ENCODE measurements at regions of chr16 and their contacts with region 1.

Region 1: GRCh38 chr16:87744750-87745514 is 20.9 kb downstream of the KLHDC4 start:
- DNase-seq: no peak

Region 2: DNA sequence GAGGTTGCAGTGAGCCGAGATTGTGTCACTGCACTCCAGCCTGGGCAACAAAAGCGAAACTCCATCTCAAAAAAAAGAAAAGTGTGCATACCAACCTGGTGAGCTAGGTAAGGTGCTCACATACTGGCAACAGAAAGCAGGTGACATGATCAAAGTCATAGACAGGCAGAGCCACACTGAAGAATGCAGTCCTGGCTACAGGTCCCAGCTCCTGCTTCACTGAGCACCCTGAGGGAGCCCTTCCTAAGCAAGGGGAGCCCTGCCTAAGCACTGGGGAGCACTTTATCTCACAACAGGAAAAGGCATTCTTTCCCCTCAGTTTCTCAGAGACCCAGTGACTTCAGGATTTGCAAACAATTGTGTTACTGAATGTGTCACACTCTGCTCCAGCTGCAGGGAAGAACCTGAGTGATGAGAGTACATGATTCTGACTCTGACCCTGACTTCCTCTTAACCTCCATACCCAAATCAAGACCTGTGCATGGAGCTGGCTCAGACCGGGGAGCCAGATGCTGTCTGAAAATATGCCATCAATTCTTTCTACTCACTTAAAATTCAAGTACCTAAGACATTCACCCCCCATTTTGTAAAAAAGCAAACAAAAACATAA is 1704.9 kb after region 1 on chr16:
- intact Hi-C with region 1: loop called in 1 of 2 experiments (anchors 5 kb)
- DNase-seq: no peak